Activated CD8-positive, alpha-beta T cell treated with anti-CD3 and anti-CD28 coated beads for 36 hours (primary cell): ENCODE measurements at regions of chr7 and their contacts with region 1.

Region 1: GRCh38 chr7:38369816-38370493 is 96.5 kb upstream of the TARP start:
- DNase-seq: peak; percentile 94
- ATAC-seq: peak; percentile 78
- H3K4me3 Mint-ChIP-seq: no peak overlapping the region
- H3K27ac Mint-ChIP-seq: peak overlapping the region; percentile 73
- H3K4me1 Mint-ChIP-seq: peaks cover 61% of the 10 kb centered on the region
- H3K27me3 Mint-ChIP-seq: no peaks in the 10 kb centered on the region
- CTCF ChIP-seq: peak; percentile 83

Region 2: GRCh38 chr7:37916673-37917660 is 453.0 kb before region 1 on chr7 and contains the start of gene SFRP4:
- CTCF ChIA-PET with region 1: interaction called, 25 read pairs
- POLR2A ChIA-PET with region 1: no interaction called
- intact Hi-C with region 1: no loop called
- DNase-seq: peak; percentile 19
- ATAC-seq: no peak
- H3K4me3 Mint-ChIP-seq: peak within 1 kb of the TSS; percentile 58
- H3K27ac Mint-ChIP-seq: no peak within 1 kb of the TSS
- H3K4me1 Mint-ChIP-seq: peaks cover 18% of the 10 kb centered on the region
- H3K27me3 Mint-ChIP-seq: peaks cover 68% of the 10 kb centered on the region
- CTCF ChIP-seq: peak; percentile 79
- total RNA-seq, gene SFRP4: not detected

Region 3: GRCh38 chr7:38178004-38178694 is 191.8 kb before region 1 on chr7 and contains the start of gene STARD3NL:
- CTCF ChIA-PET with region 1: interaction called, 20 read pairs
- POLR2A ChIA-PET with region 1: no interaction called
- intact Hi-C with region 1: no loop called
- DNase-seq: peak; percentile 94
- ATAC-seq: peak; percentile 98
- H3K4me3 Mint-ChIP-seq: peak within 1 kb of the TSS; percentile 83
- H3K27ac Mint-ChIP-seq: peak within 1 kb of the TSS; percentile 91
- H3K4me1 Mint-ChIP-seq: peaks cover 32% of the 10 kb centered on the region
- H3K27me3 Mint-ChIP-seq: no peaks in the 10 kb centered on the region
- CTCF ChIP-seq: no peak
- total RNA-seq, gene STARD3NL: 28.0 to 28.8 TPM

Region 4: DNA sequence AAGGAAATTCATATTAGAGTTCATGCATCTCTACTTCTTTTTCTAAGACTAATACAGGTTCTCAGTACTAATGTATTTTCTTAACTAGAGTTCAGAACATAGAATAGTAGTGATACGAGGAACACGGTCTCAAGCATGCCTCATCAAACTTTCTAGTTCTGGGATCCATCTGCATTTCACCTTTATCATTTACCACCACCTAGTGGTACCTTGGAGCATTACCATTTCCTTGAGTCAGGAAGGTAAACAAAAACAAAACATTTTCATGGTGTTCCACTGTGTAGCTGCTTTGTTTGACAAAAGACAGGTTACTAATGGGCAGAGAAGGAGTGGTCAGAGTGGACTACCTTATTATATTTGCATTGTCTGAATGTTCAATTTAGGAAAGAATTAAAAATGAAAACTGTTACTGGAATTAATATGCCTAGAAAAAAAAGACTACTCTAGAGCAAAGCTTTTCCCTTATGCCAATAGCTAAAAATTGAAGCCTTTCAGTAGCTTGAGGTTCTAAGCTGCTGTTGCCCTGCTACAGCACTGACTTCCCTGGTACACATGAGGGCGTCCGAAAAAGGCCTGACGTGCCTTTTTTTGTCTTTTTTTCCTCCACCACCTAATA is 147.4 kb before region 1 on chr7:
- CTCF ChIA-PET with region 1: interaction called, 247 read pairs
- POLR2A ChIA-PET with region 1: interaction called, 3 read pairs
- intact Hi-C with region 1: loop called (anchors 5 kb)
- DNase-seq: no peak
- ATAC-seq: peak; percentile 61
- H3K4me3 Mint-ChIP-seq: no peak overlapping the region
- H3K27ac Mint-ChIP-seq: peak overlapping the region; percentile 37
- H3K4me1 Mint-ChIP-seq: peaks cover 36% of the 10 kb centered on the region
- H3K27me3 Mint-ChIP-seq: no peaks in the 10 kb centered on the region
- CTCF ChIP-seq: peak; percentile 90

Region 5: GRCh38 chr7:38335492-38336147 is 34.3 kb before region 1 on chr7:
- CTCF ChIA-PET with region 1: interaction called, 72 read pairs
- POLR2A ChIA-PET with region 1: interaction called, 3 read pairs
- intact Hi-C with region 1: no loop called
- DNase-seq: peak; percentile 88
- ATAC-seq: peak; percentile 88
- H3K4me3 Mint-ChIP-seq: peak overlapping the region; percentile 71
- H3K27ac Mint-ChIP-seq: peak overlapping the region; percentile 88
- H3K4me1 Mint-ChIP-seq: peaks cover 44% of the 10 kb centered on the region
- H3K27me3 Mint-ChIP-seq: no peaks in the 10 kb centered on the region
- CTCF ChIP-seq: peak; percentile 86

Region 6: DNA sequence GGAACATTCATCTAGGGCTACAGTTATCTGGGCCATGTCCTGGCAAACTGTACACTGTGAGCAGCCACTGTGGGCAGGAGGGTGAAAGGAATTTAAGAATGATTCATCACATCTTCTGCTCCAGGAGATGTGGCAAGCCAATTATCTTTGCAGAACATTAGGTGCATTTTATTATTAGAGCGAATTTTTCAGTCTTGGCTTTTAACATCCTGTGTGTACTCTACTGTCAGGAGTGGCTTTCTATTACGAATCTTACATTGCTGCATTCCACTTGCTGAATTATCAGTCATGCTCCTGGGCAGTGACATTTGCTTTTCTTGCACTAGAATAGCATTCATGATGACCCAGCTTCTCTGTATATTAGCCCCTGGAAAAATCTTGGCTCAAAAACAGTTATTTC is 12.7 kb after region 1 on chr7:
- CTCF ChIA-PET with region 1: interaction called, 75 read pairs
- POLR2A ChIA-PET with region 1: no interaction called
- intact Hi-C with region 1: no loop called
- DNase-seq: no peak
- ATAC-seq: no peak
- H3K4me3 Mint-ChIP-seq: no peak overlapping the region
- H3K27ac Mint-ChIP-seq: no peak overlapping the region
- H3K4me1 Mint-ChIP-seq: peaks cover 3% of the 10 kb centered on the region
- H3K27me3 Mint-ChIP-seq: no peaks in the 10 kb centered on the region
- CTCF ChIP-seq: no peak